ENCODE measurements at regions of chr6 and their contacts with region 1.

Region 1: GRCh38 chr6:24933868-24934401 is 1.8 kb downstream of the RIPOR2 start:
- DNase-seq: peak in 7 of 9 experiments; percentile 40 to 82 (median 59)
- ATAC-seq: no peak
- H3K4me3 ChIP-seq: peak overlapping the region; percentile 68 to 89
- H3K4me3 Mint-ChIP-seq: peak overlapping the region; percentile 97
- H3K27ac ChIP-seq: peak overlapping the region; percentile 73 to 80
- H3K27ac Mint-ChIP-seq: peak overlapping the region; percentile 95
- H3K4me1 ChIP-seq: peaks cover 49% of the 10 kb centered on the region
- H3K4me1 Mint-ChIP-seq: peaks cover 62% of the 10 kb centered on the region
- H3K27me3 ChIP-seq: no peaks in the 10 kb centered on the region
- H3K27me3 Mint-ChIP-seq: no peaks in the 10 kb centered on the region
- CTCF ChIP-seq: peak; percentile 96

Region 2: GRCh38 chr6:24720604-24721460 is 213.1 kb before region 1 on chr6:
- CTCF ChIA-PET with region 1: interaction called, 4 read pairs
- POLR2A ChIA-PET with region 1: interaction called, 4 read pairs
- intact Hi-C with region 1: loop called in 1 of 2 experiments (anchors 10 kb)
- DNase-seq: peak; percentile 100
- ATAC-seq: peak; percentile 80
- H3K4me3 ChIP-seq: peak overlapping the region; percentile 88 to 99
- H3K4me3 Mint-ChIP-seq: peak overlapping the region; percentile 92
- H3K27ac ChIP-seq: peak overlapping the region; percentile 97 to 100
- H3K27ac Mint-ChIP-seq: peak overlapping the region; percentile 98
- H3K4me1 ChIP-seq: peaks cover 37% of the 10 kb centered on the region
- H3K4me1 Mint-ChIP-seq: peaks cover 41% of the 10 kb centered on the region
- H3K27me3 ChIP-seq: no peaks in the 10 kb centered on the region
- H3K27me3 Mint-ChIP-seq: no peaks in the 10 kb centered on the region
- CTCF ChIP-seq: no peak

Region 3: DNA sequence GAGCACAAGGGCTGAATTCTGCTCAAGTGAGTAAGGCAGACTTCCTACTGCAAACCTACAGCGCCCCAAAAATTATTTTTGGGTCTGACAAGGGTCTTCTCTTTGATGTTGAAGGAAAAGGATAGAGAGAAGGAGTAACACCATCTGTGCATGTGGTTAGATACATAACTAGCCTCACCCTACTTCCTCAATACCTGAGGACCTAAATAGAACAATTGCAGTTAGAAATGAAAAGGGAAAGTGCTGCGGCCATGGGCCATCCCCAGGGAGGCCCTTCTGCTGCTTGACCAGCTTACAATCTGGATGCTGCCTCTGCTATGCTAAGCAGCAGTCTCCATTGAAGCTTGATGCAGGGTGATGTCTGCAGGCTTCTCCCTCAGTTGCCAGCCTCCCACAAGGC is 72.0 kb before region 1 on chr6:
- CTCF ChIA-PET with region 1: interaction called, 43 read pairs
- POLR2A ChIA-PET with region 1: interaction called, 19 read pairs
- intact Hi-C with region 1: loop called (anchors 1 to 2 kb)
- DNase-seq: no peak
- ATAC-seq: no peak
- H3K4me3 ChIP-seq: peak overlapping the region in 1 of 2 experiments; percentile 2
- H3K4me3 Mint-ChIP-seq: no peak overlapping the region
- H3K27ac ChIP-seq: peak overlapping the region; percentile 11 to 75
- H3K27ac Mint-ChIP-seq: peak overlapping the region; percentile 96
- H3K4me1 ChIP-seq: peaks cover 96% of the 10 kb centered on the region
- H3K4me1 Mint-ChIP-seq: peaks cover 95% of the 10 kb centered on the region
- H3K27me3 ChIP-seq: no peaks in the 10 kb centered on the region
- H3K27me3 Mint-ChIP-seq: no peaks in the 10 kb centered on the region
- CTCF ChIP-seq: no peak

Region 4: DNA sequence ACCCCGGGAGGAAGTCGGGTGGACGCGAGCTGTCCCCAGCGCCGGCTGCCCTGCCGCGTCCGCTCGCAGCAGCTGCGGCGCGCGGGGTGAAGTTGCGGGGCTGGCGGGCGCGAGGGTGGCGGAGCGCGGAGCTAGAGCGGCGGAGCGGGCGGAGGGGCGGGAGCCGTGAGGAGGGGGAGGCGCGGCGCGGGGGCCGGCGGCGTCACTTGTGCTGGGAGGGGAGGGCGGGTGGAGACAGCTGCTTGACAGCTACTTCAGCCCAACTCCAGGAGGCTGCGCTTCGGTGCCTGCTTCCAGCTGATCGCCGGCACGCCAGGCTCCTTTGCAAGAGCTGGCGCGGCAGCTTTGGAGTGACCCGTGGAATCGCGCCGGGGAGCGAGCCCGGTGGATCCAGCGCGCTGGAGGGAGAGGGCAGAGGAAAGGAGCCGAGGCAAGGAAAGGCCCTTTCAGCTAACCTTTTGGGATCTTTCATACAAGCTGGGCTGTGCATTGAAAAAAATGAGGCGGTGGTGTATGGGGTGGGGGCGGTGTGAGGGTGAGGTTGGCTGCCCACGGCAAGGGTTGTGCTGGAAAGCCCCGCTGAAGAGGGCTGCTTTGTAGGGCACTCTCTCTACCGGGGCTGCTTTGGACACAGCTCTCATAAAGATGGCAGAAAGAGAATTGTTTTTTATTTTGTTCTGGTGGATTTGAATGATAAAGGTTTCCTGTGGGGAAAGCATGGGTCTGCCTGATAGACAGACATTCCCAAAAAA is 22.8 kb before region 1 on chr6:
- CTCF ChIA-PET with region 1: interaction called, 161 read pairs
- POLR2A ChIA-PET with region 1: interaction called, 59 read pairs
- intact Hi-C with region 1: loop called (anchors 1 to 2 kb)
- DNase-seq: peak in 7 of 9 experiments; percentile 29 to 77 (median 68)
- ATAC-seq: peak; percentile 38
- H3K4me3 ChIP-seq: peak overlapping the region; percentile 57 to 62
- H3K4me3 Mint-ChIP-seq: peak overlapping the region; percentile 94
- H3K27ac ChIP-seq: peak overlapping the region; percentile 62 to 69
- H3K27ac Mint-ChIP-seq: peak overlapping the region; percentile 98
- H3K4me1 ChIP-seq: peaks cover 92% of the 10 kb centered on the region
- H3K4me1 Mint-ChIP-seq: peaks cover 93% of the 10 kb centered on the region
- H3K27me3 ChIP-seq: no peaks in the 10 kb centered on the region
- H3K27me3 Mint-ChIP-seq: no peaks in the 10 kb centered on the region
- CTCF ChIP-seq: no peak

Region 5: GRCh38 chr6:24960991-24961475 is 27.1 kb after region 1 on chr6:
- CTCF ChIA-PET with region 1: interaction called, 70 read pairs
- POLR2A ChIA-PET with region 1: interaction called, 404 read pairs
- intact Hi-C with region 1: loop called in 1 of 2 experiments (anchors 2 kb)
- DNase-seq: peak in 3 of 9 experiments; percentile 26 to 71 (median 41)
- ATAC-seq: peak; percentile 69
- H3K4me3 ChIP-seq: peak overlapping the region in 1 of 2 experiments; percentile 6
- H3K4me3 Mint-ChIP-seq: peak overlapping the region; percentile 54
- H3K27ac ChIP-seq: peak overlapping the region; percentile 5 to 71
- H3K27ac Mint-ChIP-seq: peak overlapping the region; percentile 92
- H3K4me1 ChIP-seq: peaks cover 82% of the 10 kb centered on the region
- H3K4me1 Mint-ChIP-seq: peaks cover 84% of the 10 kb centered on the region
- H3K27me3 ChIP-seq: no peaks in the 10 kb centered on the region
- H3K27me3 Mint-ChIP-seq: no peaks in the 10 kb centered on the region
- CTCF ChIP-seq: no peak

Region 6: DNA sequence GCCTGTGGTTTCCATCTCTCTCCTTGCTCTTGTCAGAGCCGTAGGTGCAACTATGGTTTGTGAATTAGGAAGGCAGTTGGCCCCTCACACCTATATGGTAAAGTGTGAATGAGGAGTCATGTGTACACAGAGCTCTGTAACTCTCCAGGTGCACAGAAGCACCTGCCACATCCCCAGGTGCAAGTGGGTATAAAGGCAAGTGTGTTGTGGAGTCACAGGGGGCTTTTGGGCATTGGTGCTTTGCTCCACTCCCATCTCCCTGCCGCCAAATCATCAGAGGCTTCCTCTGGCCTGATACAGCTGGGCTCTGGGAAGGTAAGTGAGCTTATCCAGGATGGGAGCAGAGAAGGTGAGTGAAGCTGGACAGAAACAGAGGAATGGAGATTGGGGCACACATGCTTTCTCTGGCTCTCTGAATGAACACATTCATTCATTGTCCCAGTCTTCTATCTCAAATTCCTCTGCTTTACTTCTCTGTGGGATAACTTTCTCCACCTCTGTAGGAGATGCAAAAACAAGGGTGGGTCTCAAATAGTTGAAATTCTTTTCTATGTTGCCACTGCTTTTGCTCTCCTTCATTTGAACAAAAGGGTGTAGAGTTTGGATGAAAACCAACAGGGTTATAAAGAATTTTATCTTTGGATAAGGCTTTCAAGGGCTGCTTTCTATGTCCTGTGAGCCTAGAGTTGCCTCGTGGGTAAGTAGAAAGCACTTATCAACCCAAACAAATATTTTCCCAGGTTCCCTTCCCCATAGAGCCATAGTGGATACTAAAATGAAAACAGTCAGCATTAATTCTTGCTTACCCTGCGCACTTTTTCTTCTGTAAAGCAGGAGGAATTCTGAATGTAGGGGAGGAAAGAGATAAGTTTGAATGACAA is 46.8 kb after region 1 on chr6:
- CTCF ChIA-PET with region 1: interaction called, 70 read pairs
- POLR2A ChIA-PET with region 1: interaction called, 6 read pairs
- intact Hi-C with region 1: no loop called
- DNase-seq: peak in 1 of 9 experiments; percentile 26
- ATAC-seq: peak; percentile 57
- H3K4me3 ChIP-seq: no peak overlapping the region
- H3K4me3 Mint-ChIP-seq: no peak overlapping the region
- H3K27ac ChIP-seq: peak overlapping the region in 1 of 2 experiments; percentile 12
- H3K27ac Mint-ChIP-seq: peak overlapping the region; percentile 25
- H3K4me1 ChIP-seq: peaks cover 42% of the 10 kb centered on the region
- H3K4me1 Mint-ChIP-seq: peaks cover 65% of the 10 kb centered on the region
- H3K27me3 ChIP-seq: no peaks in the 10 kb centered on the region
- H3K27me3 Mint-ChIP-seq: no peaks in the 10 kb centered on the region
- CTCF ChIP-seq: no peak

Region 7: DNA sequence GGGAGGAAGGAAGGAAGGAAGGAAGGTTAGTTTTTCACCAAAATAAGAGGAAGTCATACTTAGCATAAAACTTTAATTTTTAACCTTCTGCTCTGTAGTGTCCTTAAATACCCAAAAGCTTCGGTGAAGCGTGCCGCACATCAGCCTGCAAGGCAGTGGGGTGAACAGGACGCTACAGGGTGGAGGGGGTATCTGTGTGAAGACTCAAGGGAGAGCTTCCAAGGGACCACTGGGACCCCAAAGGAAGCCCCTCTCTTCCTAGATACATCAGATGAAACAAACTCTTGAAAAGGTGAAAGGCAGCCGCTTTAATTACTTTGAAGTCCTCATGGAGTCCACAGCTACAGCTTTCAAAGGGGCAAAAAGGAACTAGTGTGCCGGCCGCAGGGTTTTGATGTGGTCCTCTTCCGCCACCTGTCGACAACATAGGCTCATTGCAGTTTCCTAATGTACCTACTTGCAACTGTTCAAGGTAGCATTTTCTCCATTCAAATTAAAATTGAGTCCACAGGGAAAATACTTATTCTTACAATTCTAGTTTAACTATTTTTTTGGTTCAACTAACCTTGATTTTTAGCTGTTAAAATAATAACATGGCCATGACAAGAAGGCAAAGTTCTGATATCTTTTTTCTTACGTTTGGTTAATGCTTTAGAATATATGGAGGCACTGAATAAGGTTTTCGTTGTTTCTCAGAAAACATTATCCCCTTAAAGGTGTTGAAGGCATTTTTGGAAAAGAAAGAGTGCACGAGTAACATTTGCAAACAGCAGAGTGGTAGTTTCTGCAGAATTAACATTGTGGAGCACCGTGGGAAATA is 136.8 kb after region 1 on chr6:
- CTCF ChIA-PET with region 1: interaction called, 13 read pairs
- POLR2A ChIA-PET with region 1: no interaction called
- intact Hi-C with region 1: loop called in 1 of 2 experiments (anchors 2 kb)
- DNase-seq: peak; percentile 62 to 92 (median 81)
- ATAC-seq: peak; percentile 98
- H3K4me3 ChIP-seq: peak overlapping the region in 1 of 2 experiments; percentile 12
- H3K4me3 Mint-ChIP-seq: peak overlapping the region; percentile 73
- H3K27ac ChIP-seq: peak overlapping the region in 1 of 2 experiments; percentile 31
- H3K27ac Mint-ChIP-seq: peak overlapping the region; percentile 87
- H3K4me1 ChIP-seq: no peaks in the 10 kb centered on the region
- H3K4me1 Mint-ChIP-seq: peaks cover 9% of the 10 kb centered on the region
- H3K27me3 ChIP-seq: no peaks in the 10 kb centered on the region
- H3K27me3 Mint-ChIP-seq: no peaks in the 10 kb centered on the region
- CTCF ChIP-seq: peak; percentile 92